Sigmoid colon (tissue), 7 donors: ENCODE measurements at regions of chr11 and their contacts with region 1.

Region 1: GRCh38 chr11:131504199-131504949 is 134.0 kb downstream of the NTM start:
- DNase-seq: no peak
- H3K4me3 ChIP-seq: no peak overlapping the region
- H3K27ac ChIP-seq: no peak overlapping the region
- H3K4me1 ChIP-seq: peaks cover 0 to 5% (median 2%) of the 10 kb centered on the region in 4 donors
- H3K27me3 ChIP-seq: no peaks in the 10 kb centered on the region
- CTCF ChIP-seq: peak in 2 of 4 experiments; percentile 12 to 22
- EP300 ChIP-seq: no peak
- POLR2A ChIP-seq: no peak

Region 2: GRCh38 chr11:131408025-131408640 is 96.2 kb before region 1 on chr11:
- intact Hi-C with region 1: loop called (anchors 10 kb)
- DNase-seq: no peak
- H3K4me3 ChIP-seq: no peak overlapping the region
- H3K27ac ChIP-seq: no peak overlapping the region
- H3K4me1 ChIP-seq: peaks cover 0 to 15% (median 7%) of the 10 kb centered on the region in 4 donors
- H3K27me3 ChIP-seq: no peaks in the 10 kb centered on the region
- CTCF ChIP-seq: peak in 1 of 4 experiments; percentile 37
- EP300 ChIP-seq: no peak
- POLR2A ChIP-seq: no peak